ENCODE measurements at regions of chr2 and their contacts with region 1.

Region 1: GRCh38 chr2:197191177-197191939 is 119.2 kb downstream of the ANKRD44 start:
- DNase-seq: no peak
- ATAC-seq: peak; percentile 70

Region 2: DNA sequence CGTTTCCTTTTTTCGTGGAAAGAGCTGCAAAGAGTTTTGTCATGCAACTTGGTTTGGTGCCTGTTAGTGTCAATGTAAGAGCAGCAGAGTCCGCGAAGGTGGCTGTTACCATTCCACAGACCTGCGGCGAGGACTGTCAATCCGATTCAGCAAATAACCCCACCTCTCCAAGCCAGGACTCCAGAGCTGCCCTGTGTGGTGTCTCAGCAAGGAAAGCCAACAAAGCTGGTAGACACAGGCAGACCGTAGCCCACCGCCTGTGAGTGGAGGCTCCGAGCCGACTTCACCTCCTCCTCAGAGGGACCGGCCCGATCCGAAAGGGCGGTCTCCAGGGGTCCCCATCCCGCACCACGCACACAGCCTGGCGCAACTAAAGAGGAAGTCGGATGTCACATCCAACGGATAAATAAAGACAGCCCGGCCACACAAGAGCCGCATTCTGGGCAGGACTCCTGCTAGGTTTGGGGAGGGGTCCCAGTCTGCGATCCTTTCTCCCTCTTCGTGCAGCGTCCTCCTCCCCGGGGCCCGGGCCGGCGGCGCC is 118.4 kb after region 1 on chr2:
- intact Hi-C with region 1: loop called (anchors 2 to 10 kb)
- DNase-seq: peak; percentile 27 to 49
- ATAC-seq: no peak

Measured in left colon (tissue), 2 donors.